Lower leg skin (tissue), 4 donors: ENCODE measurements at regions of chr6 and their contacts with region 1.

Region 1: GRCh38 chr6:168157272-168158007 is 78.4 kb upstream of the FRMD1 start:
- DNase-seq: peak in 1 of 2 donors; percentile 82
- H3K4me3 ChIP-seq: no peak overlapping the region
- CTCF ChIP-seq: no peak
- POLR2A ChIP-seq: no peak

Region 2: GRCh38 chr6:166691199-166691598 is 1466.2 kb before region 1 on chr6:
- intact Hi-C with region 1: no loop called
- DNase-seq: no peak
- H3K4me3 ChIP-seq: no peak overlapping the region
- CTCF ChIP-seq: no peak
- POLR2A ChIP-seq: no peak

Region 3: GRCh38 chr6:168088161-168089053 is 69.0 kb before region 1 on chr6:
- intact Hi-C with region 1: no loop called
- DNase-seq: no peak
- H3K4me3 ChIP-seq: no peak overlapping the region
- CTCF ChIP-seq: no peak
- POLR2A ChIP-seq: no peak

Region 4: GRCh38 chr6:168355716-168356449 is 198.4 kb after region 1 on chr6:
- intact Hi-C with region 1: loop called (anchors 10 kb)
- DNase-seq: peak in 1 of 2 donors; percentile 85
- H3K4me3 ChIP-seq: no peak overlapping the region
- CTCF ChIP-seq: peak in 1 of 3 donors; percentile 46
- POLR2A ChIP-seq: no peak

Region 5: GRCh38 chr6:168370310-168370991 is 213.0 kb after region 1 on chr6:
- intact Hi-C with region 1: no loop called
- DNase-seq: peak; percentile 54 to 94
- H3K4me3 ChIP-seq: no peak overlapping the region
- CTCF ChIP-seq: peak in 1 of 3 donors; percentile 59
- POLR2A ChIP-seq: no peak